ENCODE measurements at regions of chr1 and their contacts with region 1.

Region 1: DNA sequence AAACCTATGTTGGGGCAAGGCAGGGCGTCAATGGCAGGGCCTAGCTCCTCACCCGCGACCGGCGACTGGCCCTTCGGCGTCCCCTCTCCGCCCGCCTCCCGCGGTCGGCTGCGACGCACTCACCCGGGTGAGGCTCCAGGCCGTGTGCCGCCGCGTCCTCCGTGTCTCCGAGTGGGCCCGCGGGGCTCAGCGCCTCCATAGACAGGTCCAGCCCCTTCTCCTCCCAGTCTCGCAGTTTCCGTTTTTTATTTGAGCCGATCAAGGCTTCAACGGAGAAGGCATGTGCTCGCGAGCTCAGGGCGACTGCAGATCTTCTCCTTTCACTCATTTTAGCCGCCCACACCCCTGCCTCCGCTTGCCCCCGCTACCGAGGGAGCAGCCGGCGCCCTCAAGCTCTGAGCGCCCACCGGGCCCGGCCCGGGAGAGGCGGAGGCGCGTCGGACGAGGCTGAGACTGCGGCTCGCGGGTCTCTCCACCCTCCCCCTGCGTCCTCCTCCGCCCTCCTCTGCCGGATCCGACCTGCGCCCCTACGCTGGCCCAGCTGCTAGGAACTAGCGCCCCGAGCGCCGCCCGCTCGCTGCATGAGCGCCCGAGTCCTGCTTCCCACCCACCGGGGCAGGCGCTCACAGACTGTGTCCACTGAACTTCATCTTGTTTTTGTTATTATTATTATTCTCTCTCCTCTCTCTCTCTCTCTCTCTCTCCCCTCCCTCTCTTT is 516 bp downstream of the TBX15 start:
- DNase-seq: no peak
- H3K4me3 ChIP-seq: peak overlapping the region; percentile 7 to 15
- H3K27ac ChIP-seq: no peak overlapping the region
- H3K4me1 ChIP-seq: no peaks in the 10 kb centered on the region
- H3K27me3 ChIP-seq: peaks cover 93% of the 10 kb centered on the region
- CTCF ChIP-seq: no peak
- POLR2A ChIP-seq: no peak

Region 2: GRCh38 chr1:118304722-118305359 is 682.8 kb before region 1 on chr1:
- intact Hi-C with region 1: loop called (anchors 5 kb)
- DNase-seq: no peak
- H3K4me3 ChIP-seq: no peak overlapping the region
- H3K27ac ChIP-seq: no peak overlapping the region
- H3K4me1 ChIP-seq: no peaks in the 10 kb centered on the region
- H3K27me3 ChIP-seq: no peaks in the 10 kb centered on the region
- CTCF ChIP-seq: no peak
- POLR2A ChIP-seq: no peak

Region 3: GRCh38 chr1:118861216-118861615 is 126.4 kb before region 1 on chr1:
- intact Hi-C with region 1: no loop called
- DNase-seq: no peak
- H3K4me3 ChIP-seq: no peak overlapping the region
- H3K27ac ChIP-seq: no peak overlapping the region
- H3K4me1 ChIP-seq: no peaks in the 10 kb centered on the region
- H3K27me3 ChIP-seq: no peaks in the 10 kb centered on the region
- CTCF ChIP-seq: no peak
- POLR2A ChIP-seq: no peak

Region 4: DNA sequence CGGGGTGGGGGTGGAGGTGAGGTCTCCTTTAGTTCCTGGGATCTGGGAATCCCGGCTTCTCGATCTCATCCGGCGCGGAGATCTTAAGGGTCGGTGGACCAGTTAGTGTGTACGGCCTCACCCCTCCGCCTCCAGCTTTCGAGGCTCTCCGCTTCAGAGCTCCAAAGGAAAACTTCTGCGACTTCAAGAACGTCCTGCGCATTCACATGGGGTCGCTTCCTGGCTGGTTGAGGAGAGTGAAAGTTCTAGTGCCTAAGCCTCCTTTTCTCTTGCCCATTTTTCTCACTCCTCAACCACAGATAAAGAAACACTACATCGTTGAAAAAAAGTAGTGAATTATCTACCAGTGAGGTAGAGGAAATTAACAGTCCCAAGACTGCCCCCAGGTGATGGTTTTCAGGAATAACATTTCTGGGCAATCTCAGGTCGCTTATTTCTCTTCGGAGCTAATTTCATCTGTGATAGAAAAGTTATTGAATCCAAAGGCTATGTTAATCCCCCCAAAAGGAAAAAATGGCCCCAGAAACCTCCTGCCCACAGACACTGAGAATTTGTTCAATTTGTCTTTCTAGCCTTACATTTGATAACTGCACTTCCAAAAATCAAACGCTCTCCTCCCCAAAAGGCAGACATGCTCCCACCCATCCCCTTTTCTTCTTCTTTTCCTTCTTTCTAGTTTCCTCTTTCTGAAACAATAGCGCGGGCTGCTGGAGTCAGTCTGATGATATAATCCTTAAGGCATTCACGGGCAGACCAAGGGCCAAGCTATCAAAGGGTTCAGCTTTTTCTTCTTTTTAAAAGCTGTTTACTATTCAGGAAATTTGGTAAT is 21.1 kb after region 1 on chr1:
- intact Hi-C with region 1: no loop called
- DNase-seq: no peak
- H3K4me3 ChIP-seq: peak overlapping the region in 1 of 2 donors; percentile 10
- H3K27ac ChIP-seq: no peak overlapping the region
- H3K4me1 ChIP-seq: peaks cover 3% of the 10 kb centered on the region
- H3K27me3 ChIP-seq: peaks cover 20% of the 10 kb centered on the region
- CTCF ChIP-seq: peak in 3 of 4 experiments; percentile 37 to 54 (median 46)
- POLR2A ChIP-seq: no peak

Region 5: DNA sequence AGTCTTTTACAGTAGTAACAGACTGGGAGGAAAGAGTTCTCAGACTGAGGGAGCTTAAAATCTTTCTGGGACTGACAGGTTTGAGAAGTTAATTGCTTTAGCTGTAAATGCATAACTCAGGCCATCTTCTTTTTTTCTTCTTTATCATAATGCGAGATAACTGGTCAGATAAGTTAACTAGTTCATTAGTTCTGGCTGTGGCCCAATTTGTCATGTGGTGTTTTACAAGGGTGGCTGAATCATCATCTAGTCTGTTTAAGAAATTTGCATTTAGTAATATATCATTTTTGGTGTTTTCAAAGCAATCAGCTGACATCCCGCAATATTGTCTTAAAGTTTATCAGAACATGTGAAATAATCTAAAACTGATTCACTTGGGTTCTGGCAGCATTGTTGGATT is 441.4 kb after region 1 on chr1:
- intact Hi-C with region 1: no loop called
- DNase-seq: no peak
- H3K4me3 ChIP-seq: no peak overlapping the region
- H3K27ac ChIP-seq: no peak overlapping the region
- H3K4me1 ChIP-seq: no peaks in the 10 kb centered on the region
- H3K27me3 ChIP-seq: no peaks in the 10 kb centered on the region
- CTCF ChIP-seq: no peak
- POLR2A ChIP-seq: no peak